ENCODE measurements at regions of chr16 and their contacts with region 1.

Region 1: GRCh38 chr16:3645504-3646347 is 8.8 kb upstream of the DNASE1 start:
- DNase-seq: no peak
- H3K4me3 ChIP-seq: no peak overlapping the region
- H3K27ac ChIP-seq: no peak overlapping the region
- H3K4me1 ChIP-seq: peaks cover 12% of the 10 kb centered on the region
- H3K27me3 ChIP-seq: no peaks in the 10 kb centered on the region
- CTCF ChIP-seq: no peak

Region 2: GRCh38 chr16:3566990-3567389 is 78.7 kb before region 1 on chr16:
- CTCF ChIA-PET with region 1: no interaction called
- dilution Hi-C with region 1: loop called (anchors 5 kb)
- in situ Hi-C with region 1: no loop called
- intact Hi-C with region 1: no loop called
- DNase-seq: no peak
- H3K4me3 ChIP-seq: no peak overlapping the region
- H3K27ac ChIP-seq: no peak overlapping the region
- H3K4me1 ChIP-seq: no peaks in the 10 kb centered on the region
- H3K27me3 ChIP-seq: no peaks in the 10 kb centered on the region
- CTCF ChIP-seq: no peak

Region 3: DNA sequence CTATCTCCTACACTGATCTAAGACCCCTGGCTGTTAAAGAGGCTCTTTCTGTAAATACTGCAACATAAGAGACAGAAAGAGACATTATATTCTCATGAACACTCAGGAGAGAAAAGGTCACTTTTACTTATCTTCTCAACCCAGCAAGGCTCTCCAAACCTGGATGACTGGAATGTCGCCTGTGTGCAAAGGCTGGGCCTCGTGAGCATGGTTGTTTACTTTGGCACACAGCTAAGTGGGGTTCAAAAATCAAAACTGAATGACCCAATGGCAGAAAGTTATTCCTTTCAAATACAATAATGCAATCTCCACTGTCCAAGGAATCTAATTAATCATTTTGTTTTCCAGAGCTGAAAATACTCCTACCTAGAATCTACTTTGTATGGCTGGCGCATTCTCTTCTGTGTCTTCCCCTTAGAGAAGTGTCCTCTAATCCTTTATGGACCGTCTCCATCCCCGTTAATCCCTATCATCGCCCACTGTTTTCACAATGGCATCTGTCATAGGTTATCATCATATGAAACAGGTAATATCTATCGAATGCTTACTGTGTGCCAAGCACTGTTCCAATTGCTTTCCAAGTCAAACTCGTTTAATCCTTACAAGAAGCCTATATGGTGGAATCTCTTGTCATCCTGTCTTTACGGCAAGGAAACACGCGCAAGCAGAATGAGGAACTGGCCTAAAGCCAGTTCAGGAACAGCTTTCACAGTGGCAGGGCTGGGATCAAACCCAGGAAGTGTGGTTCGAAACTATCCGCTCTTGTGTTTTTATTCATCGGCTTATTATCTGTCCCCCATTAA is 35.6 kb before region 1 on chr16:
- CTCF ChIA-PET with region 1: no interaction called
- dilution Hi-C with region 1: loop called (anchors 5 kb)
- in situ Hi-C with region 1: no loop called
- intact Hi-C with region 1: no loop called
- DNase-seq: no peak
- H3K4me3 ChIP-seq: peak overlapping the region in 2 of 3 experiments; percentile 82 to 86
- H3K27ac ChIP-seq: no peak overlapping the region
- H3K4me1 ChIP-seq: peaks cover 17% of the 10 kb centered on the region
- H3K27me3 ChIP-seq: no peaks in the 10 kb centered on the region
- CTCF ChIP-seq: no peak

Region 4: GRCh38 chr16:3674513-3675295 is 29.0 kb after region 1 on chr16:
- CTCF ChIA-PET with region 1: no interaction called
- dilution Hi-C with region 1: loop called (anchors 5 kb)
- in situ Hi-C with region 1: no loop called
- intact Hi-C with region 1: no loop called
- DNase-seq: no peak
- H3K4me3 ChIP-seq: no peak overlapping the region
- H3K27ac ChIP-seq: no peak overlapping the region
- H3K4me1 ChIP-seq: no peaks in the 10 kb centered on the region
- H3K27me3 ChIP-seq: no peaks in the 10 kb centered on the region
- CTCF ChIP-seq: no peak

Region 5: DNA sequence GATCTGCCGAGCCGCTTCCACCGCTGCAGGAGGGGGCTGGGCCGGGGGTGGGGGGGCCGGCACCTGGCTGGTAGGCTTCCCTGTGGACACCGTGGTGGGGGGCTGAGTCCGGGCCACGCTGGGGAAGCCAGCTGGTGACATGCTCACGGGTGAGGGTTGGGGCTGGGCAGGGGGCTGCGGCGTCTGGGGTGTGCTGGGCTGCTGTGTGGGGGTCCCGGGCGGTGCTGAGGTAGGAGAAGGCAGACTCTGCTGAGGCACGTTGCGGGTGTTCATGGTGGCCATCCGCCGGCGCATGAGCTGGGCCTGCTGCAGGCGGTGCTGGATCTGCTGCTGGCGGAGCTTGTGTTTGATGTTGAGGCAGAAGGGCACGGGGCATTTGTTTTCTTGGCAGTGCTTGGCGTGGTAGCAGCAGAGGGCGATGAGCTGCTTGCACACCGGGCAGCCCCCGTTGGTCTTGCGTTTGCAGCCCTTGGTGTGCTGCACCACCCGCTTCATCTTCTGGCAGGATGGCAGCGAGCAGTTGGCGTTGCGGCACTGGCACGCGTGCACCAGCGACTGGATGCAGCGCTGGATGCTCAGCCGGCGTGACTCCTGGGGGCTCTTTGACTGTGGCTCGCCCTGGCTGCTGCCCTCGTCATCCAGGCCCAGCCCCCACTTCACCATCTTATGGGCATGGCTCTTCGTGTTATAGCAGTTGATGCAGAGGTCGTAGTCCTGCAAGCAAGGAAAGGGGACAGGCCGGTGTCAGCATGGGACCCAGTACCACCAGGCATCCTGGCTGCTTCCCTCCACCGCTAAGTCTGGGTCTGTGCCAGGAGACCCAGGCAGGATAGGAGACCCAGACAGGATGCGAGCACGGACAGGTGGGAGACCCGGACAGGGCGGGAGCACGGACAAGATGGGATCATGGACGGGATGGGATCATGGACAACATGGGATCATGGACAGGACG is 83.7 kb after region 1 on chr16:
- CTCF ChIA-PET with region 1: no interaction called
- dilution Hi-C with region 1: no loop called
- in situ Hi-C with region 1: no loop called
- intact Hi-C with region 1: no loop called
- DNase-seq: no peak
- H3K4me3 ChIP-seq: no peak overlapping the region
- H3K27ac ChIP-seq: no peak overlapping the region
- H3K4me1 ChIP-seq: no peaks in the 10 kb centered on the region
- H3K27me3 ChIP-seq: no peaks in the 10 kb centered on the region
- CTCF ChIP-seq: no peak

Region 6: DNA sequence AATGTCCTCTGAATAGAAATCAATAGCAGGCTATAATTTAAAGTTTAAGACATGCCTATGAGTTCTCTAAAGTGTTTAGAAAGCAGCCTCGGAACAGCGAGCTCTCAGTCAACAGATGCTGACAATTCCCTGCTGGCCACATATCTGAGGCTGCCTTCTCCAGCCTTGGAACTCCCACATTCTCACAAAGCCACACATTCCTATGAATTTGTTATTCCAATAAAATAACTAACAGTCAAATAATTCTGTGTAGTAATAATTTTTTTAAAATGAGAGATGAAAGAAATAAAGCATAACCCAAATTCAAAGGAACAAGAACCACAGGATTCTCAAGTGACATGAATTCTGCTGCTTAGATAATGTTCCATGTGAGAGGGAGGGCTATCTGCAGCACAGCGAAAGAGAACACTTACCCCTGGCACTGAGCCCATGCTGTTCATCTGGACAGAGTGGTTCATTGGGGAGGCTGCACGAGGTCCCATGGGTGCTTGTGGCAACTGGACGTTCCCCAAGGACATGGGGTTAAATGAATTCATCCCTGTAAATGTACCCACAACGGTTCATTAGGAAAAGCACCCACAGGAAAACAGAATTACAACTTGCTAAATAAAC is 128.5 kb after region 1 on chr16:
- CTCF ChIA-PET with region 1: no interaction called
- dilution Hi-C with region 1: loop called (anchors 5 kb)
- in situ Hi-C with region 1: no loop called
- intact Hi-C with region 1: no loop called
- DNase-seq: no peak
- H3K4me3 ChIP-seq: no peak overlapping the region
- H3K27ac ChIP-seq: no peak overlapping the region
- H3K4me1 ChIP-seq: peaks cover 7% of the 10 kb centered on the region
- H3K27me3 ChIP-seq: no peaks in the 10 kb centered on the region
- CTCF ChIP-seq: no peak

Region 7: DNA sequence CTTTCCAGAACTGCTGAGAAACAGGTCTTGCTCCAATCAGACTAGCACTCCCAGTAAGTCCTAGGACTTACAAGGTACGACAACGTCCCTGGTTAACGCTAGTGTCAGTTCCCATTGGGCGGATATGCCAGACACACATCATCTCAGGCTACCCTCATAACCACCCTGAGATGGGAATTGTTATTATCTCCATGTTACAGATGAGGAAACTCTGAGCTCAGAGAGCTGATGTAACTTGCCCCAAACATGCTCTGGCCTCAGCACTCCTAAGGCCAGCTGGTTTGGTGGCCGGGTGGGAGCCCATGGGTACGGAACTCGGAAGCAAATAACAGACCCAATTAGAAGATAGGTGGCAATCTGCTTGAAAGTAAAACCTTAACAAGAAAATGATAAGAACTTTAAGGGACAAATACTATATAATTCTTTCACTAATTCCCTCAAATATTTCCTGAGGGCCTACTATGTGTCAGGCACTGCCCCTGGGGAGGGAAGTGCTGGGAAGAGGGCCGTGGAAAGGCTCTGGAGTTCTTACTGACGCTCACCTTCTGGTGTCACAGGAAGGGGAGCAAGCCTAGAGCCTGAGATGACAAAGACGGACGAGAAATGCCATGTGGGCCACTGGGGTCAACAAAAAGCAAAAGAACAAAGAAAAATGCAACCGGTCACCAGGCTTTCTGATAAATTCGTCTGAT is 227.9 kb after region 1 on chr16:
- CTCF ChIA-PET with region 1: interaction called, 11 read pairs
- dilution Hi-C with region 1: loop called (anchors 10 kb)
- in situ Hi-C with region 1: no loop called
- intact Hi-C with region 1: no loop called
- DNase-seq: no peak
- H3K4me3 ChIP-seq: no peak overlapping the region
- H3K27ac ChIP-seq: no peak overlapping the region
- H3K4me1 ChIP-seq: peaks cover 9% of the 10 kb centered on the region
- H3K27me3 ChIP-seq: no peaks in the 10 kb centered on the region
- CTCF ChIP-seq: no peak

Measured in mammary epithelial cell (primary cell).